Psoas muscle (tissue), 8 donors: ENCODE measurements at regions of chr13 and their contacts with region 1.

Region 1: DNA sequence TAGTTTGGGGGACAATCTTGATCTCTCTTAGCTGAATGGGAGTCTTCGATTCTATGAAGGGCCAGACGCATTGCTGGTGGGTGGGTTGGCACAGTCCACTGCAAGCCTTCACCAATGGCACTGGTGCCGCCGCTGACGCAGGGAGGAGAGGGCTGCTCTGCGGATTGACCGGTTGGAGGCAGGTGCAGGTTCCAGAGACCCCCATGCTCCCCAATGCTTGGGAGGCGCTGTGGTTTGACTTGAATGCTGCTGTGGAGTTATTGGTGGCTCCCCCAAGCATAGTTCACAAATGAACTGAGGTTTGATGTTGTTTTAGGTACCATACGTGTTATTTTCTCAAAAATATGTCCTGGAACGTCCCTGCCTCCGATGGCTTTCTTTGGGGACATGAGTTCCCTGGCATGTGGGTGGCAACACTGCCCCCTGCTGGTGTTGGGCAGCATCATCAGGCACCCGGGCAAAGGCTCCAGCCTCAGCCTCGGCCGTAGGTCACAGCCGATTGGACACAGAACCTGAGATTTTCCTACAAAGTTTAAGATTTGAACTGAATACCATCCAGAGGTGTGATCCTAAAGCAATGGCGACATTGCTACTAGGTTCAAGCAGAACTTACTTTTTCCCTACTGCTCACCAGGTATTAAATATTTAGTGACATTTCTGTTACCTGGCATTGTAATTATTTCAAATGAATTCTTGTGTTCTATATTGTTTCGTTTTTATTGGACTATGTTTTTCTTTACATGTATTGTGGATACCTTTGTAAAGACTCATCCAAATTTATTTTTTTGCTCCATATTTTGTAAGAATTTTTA is 95.5 kb downstream of the ANKRD10 start:
- DNase-seq: peak; percentile 80 to 87
- ATAC-seq: peak; percentile 89 to 97 (median 92)
- H3K4me3 ChIP-seq: no peak overlapping the region
- H3K27ac ChIP-seq: no peak overlapping the region
- H3K4me1 ChIP-seq: peaks cover 14% of the 10 kb centered on the region
- H3K27me3 ChIP-seq: no peaks in the 10 kb centered on the region
- CTCF ChIP-seq: peak; percentile 99

Region 2: GRCh38 chr13:110455941-110456340 is 363.5 kb before region 1 on chr13:
- intact Hi-C with region 1: loop called in 1 of 2 experiments (anchors 10 kb)
- DNase-seq: peak; percentile 72 to 77
- ATAC-seq: peak; percentile 89 to 95 (median 92)
- H3K4me3 ChIP-seq: peak overlapping the region; percentile 12
- H3K27ac ChIP-seq: no peak overlapping the region
- H3K4me1 ChIP-seq: no peaks in the 10 kb centered on the region
- H3K27me3 ChIP-seq: no peaks in the 10 kb centered on the region
- CTCF ChIP-seq: peak; percentile 74

Region 3: DNA sequence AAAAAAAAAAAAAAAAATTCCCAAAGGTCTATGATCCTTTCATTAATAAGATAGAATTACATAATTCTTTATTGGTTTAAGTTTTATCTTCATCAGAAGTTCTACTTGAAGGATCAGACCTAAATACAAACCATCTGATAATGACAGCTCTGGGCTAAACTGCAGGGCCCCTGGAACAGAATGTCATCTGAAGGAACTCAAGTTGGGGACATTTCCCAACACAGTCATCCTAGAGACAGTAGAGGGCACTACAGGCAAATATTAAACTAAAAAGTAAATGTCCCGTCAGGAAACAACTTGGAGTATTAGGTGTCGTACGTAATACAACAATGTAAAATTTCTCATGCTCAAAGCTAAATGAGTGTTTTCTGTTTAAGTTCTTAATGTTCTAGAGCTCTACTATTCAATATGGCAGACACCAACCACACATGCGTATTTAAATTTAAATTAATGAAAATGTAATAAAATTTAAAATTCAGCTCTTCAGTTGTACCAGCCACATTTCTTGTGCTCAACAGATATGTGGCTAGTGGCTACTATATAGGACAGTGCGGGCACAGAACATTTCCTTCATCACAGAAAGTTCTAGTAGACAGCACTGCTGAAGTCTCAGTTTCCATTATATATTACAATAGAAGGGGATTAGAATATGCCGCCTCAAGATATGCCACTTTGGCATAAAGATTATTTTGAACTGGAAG is 225.8 kb before region 1 on chr13:
- intact Hi-C with region 1: loop called (anchors 2 to 5 kb)
- DNase-seq: no peak
- ATAC-seq: peak; percentile 74 to 96 (median 91)
- H3K4me3 ChIP-seq: no peak overlapping the region
- H3K27ac ChIP-seq: no peak overlapping the region
- H3K4me1 ChIP-seq: peaks cover 4% of the 10 kb centered on the region
- H3K27me3 ChIP-seq: no peaks in the 10 kb centered on the region
- CTCF ChIP-seq: peak; percentile 62

Region 4: DNA sequence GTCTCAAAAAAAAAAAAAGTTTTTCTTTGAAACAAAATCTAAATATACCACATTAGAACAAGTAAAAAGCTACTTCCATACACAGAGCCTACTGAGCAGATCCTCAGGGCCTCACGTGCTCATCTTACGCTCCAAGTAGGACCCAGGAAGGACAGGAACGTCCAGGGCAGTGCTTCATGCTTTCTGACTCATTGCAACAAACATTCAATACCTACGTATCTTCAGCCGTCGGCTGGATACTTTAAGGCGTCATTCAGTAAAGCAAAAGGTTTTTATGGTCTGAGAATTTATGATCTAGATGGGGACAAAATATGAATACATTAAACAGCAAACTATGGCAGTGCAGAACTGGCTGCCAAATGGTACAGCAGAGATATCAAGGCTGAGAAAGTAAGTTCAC is 134.1 kb before region 1 on chr13:
- intact Hi-C with region 1: loop called in 1 of 2 experiments (anchors 2 kb)
- DNase-seq: no peak
- ATAC-seq: no peak
- H3K4me3 ChIP-seq: no peak overlapping the region
- H3K27ac ChIP-seq: no peak overlapping the region
- H3K4me1 ChIP-seq: peaks cover 14% of the 10 kb centered on the region
- H3K27me3 ChIP-seq: no peaks in the 10 kb centered on the region
- CTCF ChIP-seq: no peak

Region 5: GRCh38 chr13:110715395-110716235 is 103.8 kb before region 1 on chr13:
- intact Hi-C with region 1: loop called (anchors 2 to 10 kb)
- DNase-seq: peak; percentile 97 to 99
- ATAC-seq: peak; percentile 72 to 78 (median 74)
- H3K4me3 ChIP-seq: peak overlapping the region; percentile 90
- H3K27ac ChIP-seq: peak overlapping the region; percentile 99
- H3K4me1 ChIP-seq: peaks cover 28% of the 10 kb centered on the region
- H3K27me3 ChIP-seq: no peaks in the 10 kb centered on the region
- CTCF ChIP-seq: peak; percentile 21

Region 6: GRCh38 chr13:110868720-110869119 is 49.3 kb after region 1 on chr13:
- intact Hi-C with region 1: no loop called
- DNase-seq: no peak
- ATAC-seq: peak in 3 of 4 donors; percentile 25 to 42 (median 38)
- H3K4me3 ChIP-seq: peak overlapping the region; percentile 89
- H3K27ac ChIP-seq: peak overlapping the region; percentile 100
- H3K4me1 ChIP-seq: peaks cover 30% of the 10 kb centered on the region
- H3K27me3 ChIP-seq: no peaks in the 10 kb centered on the region
- CTCF ChIP-seq: no peak